ENCODE measurements at regions of chr2 and their contacts with region 1.

Region 1: GRCh38 chr2:227766373-227766883 is 20.7 kb downstream of the SCYGR8 start:
- DNase-seq: peak; percentile 86
- H3K4me3 Mint-ChIP-seq: no peak overlapping the region
- H3K27ac Mint-ChIP-seq: no peak overlapping the region
- H3K4me1 Mint-ChIP-seq: peaks cover 5% of the 10 kb centered on the region
- H3K27me3 Mint-ChIP-seq: no peaks in the 10 kb centered on the region
- CTCF ChIP-seq: peak; percentile 80

Region 2: GRCh38 chr2:227132986-227133385 is 633.4 kb before region 1 on chr2:
- CTCF ChIA-PET with region 1: interaction called, 7 read pairs
- POLR2A ChIA-PET with region 1: no interaction called
- intact Hi-C with region 1: loop called (anchors 1 kb)
- DNase-seq: no peak
- H3K4me3 Mint-ChIP-seq: no peak overlapping the region
- H3K27ac Mint-ChIP-seq: no peak overlapping the region
- H3K4me1 Mint-ChIP-seq: peaks cover 5% of the 10 kb centered on the region
- H3K27me3 Mint-ChIP-seq: peaks cover 14% of the 10 kb centered on the region
- CTCF ChIP-seq: no peak

Region 3: GRCh38 chr2:227324995-227325838 is 441.2 kb before region 1 on chr2 and contains the start of gene MFF:
- CTCF ChIA-PET with region 1: no interaction called
- POLR2A ChIA-PET with region 1: no interaction called
- intact Hi-C with region 1: loop called (anchors 10 kb)
- DNase-seq: peak; percentile 93
- H3K4me3 Mint-ChIP-seq: peak within 1 kb of the TSS; percentile 89
- H3K27ac Mint-ChIP-seq: peak within 1 kb of the TSS; percentile 92
- H3K4me1 Mint-ChIP-seq: peaks cover 5% of the 10 kb centered on the region
- H3K27me3 Mint-ChIP-seq: no peaks in the 10 kb centered on the region
- CTCF ChIP-seq: peak; percentile 34
- total RNA-seq, gene MFF: 81.2 and 90.2 TPM in 2 replicates

Region 4: GRCh38 chr2:227479865-227480475 is 286.5 kb before region 1 on chr2:
- CTCF ChIA-PET with region 1: interaction called, 19 read pairs
- POLR2A ChIA-PET with region 1: no interaction called
- intact Hi-C with region 1: loop called (anchors 1 kb)
- DNase-seq: peak; percentile 63
- H3K4me3 Mint-ChIP-seq: no peak overlapping the region
- H3K27ac Mint-ChIP-seq: peak overlapping the region; percentile 47
- H3K4me1 Mint-ChIP-seq: peaks cover 39% of the 10 kb centered on the region
- H3K27me3 Mint-ChIP-seq: no peaks in the 10 kb centered on the region
- CTCF ChIP-seq: peak; percentile 43

Region 5: GRCh38 chr2:227665189-227665940 is 101.1 kb before region 1 on chr2:
- CTCF ChIA-PET with region 1: interaction called, 143 read pairs
- POLR2A ChIA-PET with region 1: interaction called, 3 read pairs
- intact Hi-C with region 1: no loop called
- DNase-seq: no peak
- H3K4me3 Mint-ChIP-seq: no peak overlapping the region
- H3K27ac Mint-ChIP-seq: no peak overlapping the region
- H3K4me1 Mint-ChIP-seq: no peaks in the 10 kb centered on the region
- H3K27me3 Mint-ChIP-seq: no peaks in the 10 kb centered on the region
- CTCF ChIP-seq: no peak

Region 6: DNA sequence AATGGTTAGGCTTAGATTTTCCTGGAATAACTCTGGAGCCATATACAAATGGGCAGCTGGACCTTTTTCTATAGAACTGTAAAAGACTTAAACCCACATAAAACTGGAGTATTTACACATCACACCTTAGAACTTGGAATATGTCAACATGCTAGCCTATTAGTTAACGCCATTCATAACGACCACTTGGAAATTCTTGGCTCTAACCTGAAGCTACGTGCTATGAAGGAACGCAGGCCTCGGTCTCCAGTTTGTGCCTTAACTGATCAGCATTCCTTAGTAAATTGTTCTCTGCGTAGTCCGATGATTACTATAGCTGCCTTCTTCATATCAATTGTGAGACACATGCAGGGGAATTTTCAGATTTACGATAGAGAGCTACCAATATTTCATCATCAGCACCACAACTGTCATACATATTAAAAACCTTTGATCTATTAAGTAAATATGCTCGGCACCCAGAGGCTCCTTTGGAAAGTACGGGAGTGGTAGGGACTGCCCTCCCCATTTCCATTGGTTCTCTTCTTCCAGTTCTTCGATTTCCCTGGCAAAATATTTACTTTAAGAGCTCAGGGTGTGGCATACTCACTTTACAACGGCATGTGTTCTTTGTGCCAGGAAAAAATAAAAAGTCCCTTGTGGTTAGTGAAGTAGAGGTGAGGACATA is 29.8 kb after region 1 on chr2:
- CTCF ChIA-PET with region 1: interaction called, 10 read pairs
- POLR2A ChIA-PET with region 1: no interaction called
- intact Hi-C with region 1: no loop called
- DNase-seq: peak; percentile 78
- H3K4me3 Mint-ChIP-seq: peak overlapping the region; percentile 28
- H3K27ac Mint-ChIP-seq: peak overlapping the region; percentile 64
- H3K4me1 Mint-ChIP-seq: peaks cover 8% of the 10 kb centered on the region
- H3K27me3 Mint-ChIP-seq: no peaks in the 10 kb centered on the region
- CTCF ChIP-seq: no peak

Region 7: DNA sequence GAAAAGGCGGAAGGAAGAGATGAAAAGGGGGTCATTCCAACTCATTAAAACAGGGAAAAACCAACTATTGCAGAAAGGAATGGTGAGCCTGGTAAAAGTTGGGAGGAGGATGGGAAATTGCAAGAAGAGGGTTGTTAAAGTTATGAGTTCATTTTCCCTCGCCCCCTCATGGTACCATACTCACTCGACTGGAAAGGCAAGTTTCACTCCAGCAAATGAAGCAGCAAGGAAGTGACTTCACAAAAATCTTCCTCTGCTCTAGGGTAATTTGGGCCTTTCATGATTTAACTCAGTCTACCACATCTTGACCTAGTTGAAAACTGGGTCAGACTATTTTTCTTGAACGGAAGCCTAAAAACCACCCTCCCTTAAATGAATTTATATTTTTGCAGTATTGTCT is 82.2 kb after region 1 on chr2:
- CTCF ChIA-PET with region 1: no interaction called
- POLR2A ChIA-PET with region 1: no interaction called
- intact Hi-C with region 1: no loop called
- DNase-seq: no peak
- H3K4me3 Mint-ChIP-seq: no peak overlapping the region
- H3K27ac Mint-ChIP-seq: no peak overlapping the region
- H3K4me1 Mint-ChIP-seq: peaks cover 31% of the 10 kb centered on the region
- H3K27me3 Mint-ChIP-seq: no peaks in the 10 kb centered on the region
- CTCF ChIP-seq: no peak

Region 8: GRCh38 chr2:228039752-228040534 is 273.5 kb after region 1 on chr2:
- CTCF ChIA-PET with region 1: no interaction called
- POLR2A ChIA-PET with region 1: no interaction called
- intact Hi-C with region 1: no loop called
- DNase-seq: peak; percentile 56
- H3K4me3 Mint-ChIP-seq: no peak overlapping the region
- H3K27ac Mint-ChIP-seq: no peak overlapping the region
- H3K4me1 Mint-ChIP-seq: no peaks in the 10 kb centered on the region
- H3K27me3 Mint-ChIP-seq: no peaks in the 10 kb centered on the region
- CTCF ChIP-seq: peak; percentile 63